Sigmoid colon (tissue), 7 donors: ENCODE measurements at regions of chr15 and their contacts with region 1.

Region 1: GRCh38 chr15:29490747-29491471 is 221.3 kb upstream of the NSMCE3 start:
- DNase-seq: no peak
- H3K4me3 ChIP-seq: no peak overlapping the region
- H3K27ac ChIP-seq: no peak overlapping the region
- H3K4me1 ChIP-seq: no peaks in the 10 kb centered on the region
- H3K27me3 ChIP-seq: no peaks in the 10 kb centered on the region
- CTCF ChIP-seq: no peak
- EP300 ChIP-seq: no peak
- POLR2A ChIP-seq: no peak

Region 2: GRCh38 chr15:27977696-27978095 is 1513.2 kb before region 1 on chr15:
- intact Hi-C with region 1: no loop called
- DNase-seq: no peak
- H3K4me3 ChIP-seq: no peak overlapping the region
- H3K27ac ChIP-seq: no peak overlapping the region
- H3K4me1 ChIP-seq: no peaks in the 10 kb centered on the region
- H3K27me3 ChIP-seq: no peaks in the 10 kb centered on the region
- CTCF ChIP-seq: no peak
- EP300 ChIP-seq: no peak
- POLR2A ChIP-seq: no peak

Region 3: DNA sequence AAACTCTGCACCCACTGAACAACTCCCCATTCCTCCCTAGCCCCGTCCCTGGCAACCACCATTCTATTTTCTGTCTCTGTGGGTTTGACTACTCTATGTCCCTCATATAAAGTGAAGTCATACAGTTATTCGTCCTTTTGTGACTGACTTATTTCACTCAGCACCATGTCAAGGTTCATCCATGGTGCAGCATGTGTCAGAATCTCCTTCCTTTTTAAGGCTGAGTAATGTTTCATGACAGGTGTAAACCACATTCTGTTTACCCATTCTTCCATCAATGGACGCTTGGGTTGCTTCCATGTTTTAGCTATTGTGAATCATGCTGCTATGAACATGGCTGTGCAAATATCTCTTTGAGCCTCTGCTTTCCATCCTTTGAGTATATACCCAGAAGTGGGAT is 29.0 kb before region 1 on chr15:
- intact Hi-C with region 1: loop called (anchors 5 kb)
- DNase-seq: no peak
- H3K4me3 ChIP-seq: no peak overlapping the region
- H3K27ac ChIP-seq: no peak overlapping the region
- H3K4me1 ChIP-seq: peaks cover 0 to 15% (median 11%) of the 10 kb centered on the region in 4 donors
- H3K27me3 ChIP-seq: no peaks in the 10 kb centered on the region
- CTCF ChIP-seq: no peak
- EP300 ChIP-seq: no peak
- POLR2A ChIP-seq: no peak